Cardiac septum (tissue), 1 donor: ENCODE measurements at regions of chr16 and their contacts with region 1.

Region 1: GRCh38 chr16:70380861-70381603 is 34.3 kb downstream of the DDX19A start:
- DNase-seq: peak; percentile 97

Region 2: DNA sequence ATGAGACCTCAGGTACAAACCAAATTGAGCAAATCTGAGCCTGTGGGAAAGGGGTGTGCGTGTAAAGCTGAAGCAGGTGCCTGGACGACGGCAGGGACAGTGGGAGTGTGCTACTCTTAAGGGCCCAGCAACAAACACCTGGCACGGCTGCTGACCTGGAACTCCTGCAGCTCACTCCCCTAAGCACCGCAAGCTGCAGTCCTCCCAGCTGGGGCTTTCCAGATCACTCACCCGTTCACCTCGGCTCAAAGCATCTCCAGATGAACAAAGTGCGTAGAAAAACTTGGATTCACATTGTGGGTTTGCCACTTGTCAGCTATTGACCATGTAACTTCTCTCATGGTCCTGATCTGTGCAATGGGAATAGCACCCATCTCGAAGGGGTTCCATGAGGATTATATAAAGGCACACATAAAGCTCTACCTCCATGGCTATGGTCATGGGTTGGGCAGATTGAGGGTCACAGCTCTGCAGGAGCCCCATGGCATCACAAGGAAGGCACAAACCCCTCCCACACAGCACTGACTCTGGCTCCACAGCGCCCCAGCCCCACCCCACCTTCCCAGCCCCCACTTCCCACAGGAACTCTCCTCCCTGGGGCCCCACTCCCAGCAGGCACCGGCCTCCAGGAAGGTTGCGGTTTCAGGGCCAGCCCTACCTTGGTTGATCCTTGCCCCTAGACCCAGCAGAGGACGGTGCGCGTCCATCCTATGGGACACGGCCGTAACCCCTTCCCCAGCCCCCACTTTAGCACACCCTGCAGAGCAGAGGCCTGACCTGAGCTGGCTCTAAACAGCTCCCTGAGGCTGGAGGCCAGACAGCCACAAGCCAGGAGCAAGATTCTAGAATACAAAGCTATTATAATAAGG is 36.0 kb after region 1 on chr16:
- intact Hi-C with region 1: no loop called
- DNase-seq: no peak

Region 3: GRCh38 chr16:70430667-70431536 is 49.9 kb after region 1 on chr16:
- intact Hi-C with region 1: loop called (anchors 5 kb)
- DNase-seq: no peak